PC-9 (cell line): ENCODE measurements at regions of chr14 and their contacts with region 1.

Region 1: DNA sequence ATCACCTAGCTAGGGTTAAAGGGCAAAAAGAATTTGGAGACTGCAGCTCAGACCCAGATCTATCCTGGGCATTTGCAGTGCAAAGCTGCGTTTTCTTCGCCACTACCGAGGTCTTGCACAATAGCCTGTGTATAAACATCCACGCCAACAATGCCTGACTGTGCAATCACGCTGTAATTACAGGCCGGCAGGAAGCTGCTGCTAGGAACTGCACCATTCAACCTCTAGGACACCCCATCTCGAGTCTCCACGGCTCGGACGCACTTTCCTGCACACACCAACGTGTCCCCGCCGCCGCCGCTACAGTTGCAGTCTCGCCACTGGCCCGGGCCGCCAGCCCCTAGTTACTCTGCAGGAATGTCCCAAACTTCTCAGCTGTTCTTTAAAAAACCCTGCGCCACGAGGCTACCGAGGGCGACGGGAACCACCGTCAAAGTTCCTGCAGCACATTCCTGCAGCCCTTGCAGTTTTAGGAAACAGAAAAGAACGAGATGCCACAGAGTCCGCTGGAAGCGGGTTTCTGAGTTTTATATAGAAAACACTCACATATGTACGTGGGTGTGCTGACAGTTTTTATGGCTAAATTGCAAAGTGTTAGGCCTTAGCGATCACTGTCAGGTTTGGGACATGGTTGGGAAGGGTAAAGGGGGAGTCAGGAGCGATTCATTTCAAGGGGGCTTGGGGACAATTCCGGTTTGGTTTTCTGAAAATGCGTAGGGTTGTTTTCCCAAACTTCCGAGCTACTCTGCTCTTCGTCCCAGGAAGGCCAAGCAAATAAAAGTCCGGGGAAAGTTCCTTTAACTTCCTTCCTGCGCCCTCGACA is 65.5 kb upstream of the PTGR2 start:
- DNase-seq: peak; percentile 61 to 85
- H3K4me3 ChIP-seq: peak overlapping the region; percentile 71
- H3K27ac ChIP-seq: peak overlapping the region; percentile 77
- H3K4me1 ChIP-seq: peaks cover 38% of the 10 kb centered on the region
- H3K27me3 ChIP-seq: no peaks in the 10 kb centered on the region
- CTCF ChIP-seq: peak; percentile 43; the same call in 1 of the 2 replicates

Region 2: GRCh38 chr14:73613046-73613383 is 173.1 kb before region 1 on chr14:
- CTCF ChIA-PET with region 1: no interaction called
- POLR2A ChIA-PET with region 1: no interaction called
- intact Hi-C with region 1: no loop called
- DNase-seq: no peak
- H3K4me3 ChIP-seq: peak overlapping the region; percentile 60; the same call in 1 of the 2 replicates
- H3K27ac ChIP-seq: no peak overlapping the region
- H3K4me1 ChIP-seq: peaks cover 29% of the 10 kb centered on the region
- H3K27me3 ChIP-seq: no peaks in the 10 kb centered on the region
- CTCF ChIP-seq: no peak

Region 3: DNA sequence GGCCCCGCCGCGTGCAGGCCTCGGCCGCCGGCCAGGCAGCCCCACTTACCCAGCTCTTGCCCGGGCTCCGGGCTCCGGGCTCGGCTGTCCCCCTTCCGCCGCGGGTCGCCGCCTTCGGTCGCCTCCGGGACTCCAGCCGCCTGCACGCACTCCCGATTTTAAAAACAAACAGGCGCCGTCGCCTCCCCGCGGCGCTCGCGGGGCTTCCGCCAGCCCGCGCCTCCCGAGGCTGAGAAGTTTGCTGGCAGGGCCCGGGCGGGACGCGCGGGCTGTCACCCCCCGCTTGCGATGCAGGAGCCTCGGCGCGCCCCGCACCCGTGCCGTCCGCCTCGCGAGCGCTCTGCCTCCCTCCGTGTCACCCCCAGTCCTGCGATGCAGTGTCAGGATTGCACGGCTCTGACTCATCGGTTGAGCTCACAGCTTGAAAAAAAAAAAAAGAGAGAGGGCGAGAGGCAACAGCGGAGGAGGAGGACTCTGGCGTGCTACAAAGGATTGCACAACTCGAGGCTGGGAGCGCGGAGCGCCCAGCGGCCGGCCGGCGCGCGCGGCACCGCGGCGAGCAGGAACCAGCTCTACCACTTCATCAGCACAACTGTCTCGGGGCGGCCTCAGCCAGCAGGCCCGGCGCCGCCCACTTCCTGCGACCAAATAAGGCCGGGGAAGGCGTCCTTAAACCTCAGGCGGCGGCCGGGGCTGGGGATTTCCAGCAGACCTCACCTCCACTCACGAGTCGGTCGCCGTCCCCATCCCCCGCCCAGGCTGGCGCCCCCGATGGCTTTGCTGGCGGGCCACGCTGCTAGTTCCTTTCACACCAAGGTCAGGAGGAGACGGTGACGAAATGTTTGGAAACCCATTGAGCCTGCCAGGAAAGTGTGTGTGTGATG is 26.1 kb before region 1 on chr14:
- CTCF ChIA-PET with region 1: no interaction called
- POLR2A ChIA-PET with region 1: interaction called, 6 read pairs
- intact Hi-C with region 1: loop called (anchors 1 kb)
- DNase-seq: peak; percentile 96
- H3K4me3 ChIP-seq: peak overlapping the region; percentile 90
- H3K27ac ChIP-seq: peak overlapping the region; percentile 76
- H3K4me1 ChIP-seq: peaks cover 54% of the 10 kb centered on the region
- H3K27me3 ChIP-seq: no peaks in the 10 kb centered on the region
- CTCF ChIP-seq: no peak

Region 4: DNA sequence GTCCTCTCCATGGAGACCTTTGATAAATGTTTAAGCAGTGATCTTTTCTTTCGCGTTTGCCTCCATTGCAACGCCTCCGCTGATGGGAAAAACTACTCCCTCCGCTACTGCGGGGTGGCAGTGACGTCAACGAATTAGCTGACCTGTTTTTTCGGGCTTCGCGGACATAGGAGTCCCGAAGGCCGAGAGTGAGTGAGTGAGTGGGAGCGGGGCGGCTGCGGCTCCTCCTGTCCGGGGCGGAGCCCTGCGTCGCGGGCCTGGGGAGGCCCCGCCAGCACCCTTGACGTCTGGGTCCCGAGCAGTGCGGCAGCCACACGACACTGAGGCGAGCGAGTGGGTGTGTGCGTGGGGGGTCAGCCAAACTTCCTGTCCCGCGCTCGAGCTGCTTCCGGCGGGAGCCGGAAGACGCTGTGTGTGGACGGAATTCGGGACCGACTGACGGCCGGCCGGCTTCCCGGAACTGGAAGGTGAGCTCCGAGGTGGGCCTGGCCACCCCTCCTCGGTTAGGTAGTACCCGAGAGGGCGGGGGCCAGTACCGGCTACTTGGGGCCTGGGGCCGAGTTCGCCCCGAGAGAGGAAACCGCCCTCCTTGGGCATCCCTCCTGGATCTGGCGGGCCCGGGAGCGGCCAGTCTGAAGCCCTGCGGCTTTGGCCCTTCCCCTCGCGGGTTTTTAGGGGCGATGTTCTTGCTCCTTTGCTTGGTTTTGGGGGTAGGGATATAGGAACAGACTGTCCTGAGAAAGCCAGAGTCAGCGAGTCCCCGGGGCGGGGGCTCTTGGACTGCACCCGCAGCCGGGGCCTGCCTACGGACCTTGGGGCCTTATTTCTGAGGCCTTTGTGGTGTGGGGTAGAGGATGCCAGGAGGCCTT is 100.6 kb after region 1 on chr14 and contains the start of gene ZNF410:
- CTCF ChIA-PET with region 1: no interaction called
- POLR2A ChIA-PET with region 1: interaction called, 14 read pairs
- intact Hi-C with region 1: no loop called
- DNase-seq: peak; percentile 85 to 91
- H3K4me3 ChIP-seq: peak within 1 kb of the TSS; percentile 91
- H3K27ac ChIP-seq: peak within 1 kb of the TSS; percentile 70
- H3K4me1 ChIP-seq: peaks cover 32% of the 10 kb centered on the region
- H3K27me3 ChIP-seq: no peaks in the 10 kb centered on the region
- CTCF ChIP-seq: no peak
- total RNA-seq, gene ZNF410: 38.6 and 40.2 TPM in 2 replicates

Region 5: GRCh38 chr14:74456684-74457564 is 670.8 kb after region 1 on chr14:
- CTCF ChIA-PET with region 1: no interaction called
- POLR2A ChIA-PET with region 1: no interaction called
- intact Hi-C with region 1: no loop called
- DNase-seq: no peak
- H3K4me3 ChIP-seq: no peak overlapping the region
- H3K27ac ChIP-seq: no peak overlapping the region
- H3K4me1 ChIP-seq: peaks cover 12% of the 10 kb centered on the region
- H3K27me3 ChIP-seq: no peaks in the 10 kb centered on the region
- CTCF ChIP-seq: no peak